ENCODE measurements at regions of chr10 and their contacts with region 1.

Region 1: GRCh38 chr10:88791924-88792323 is 10.6 kb upstream of the LIPM start:
- DNase-seq: peak; percentile 25
- H3K4me3 Mint-ChIP-seq: no peak overlapping the region
- H3K27ac Mint-ChIP-seq: no peak overlapping the region
- H3K4me1 Mint-ChIP-seq: peaks cover 19% of the 10 kb centered on the region
- H3K27me3 Mint-ChIP-seq: peaks cover 4% of the 10 kb centered on the region

Region 2: DNA sequence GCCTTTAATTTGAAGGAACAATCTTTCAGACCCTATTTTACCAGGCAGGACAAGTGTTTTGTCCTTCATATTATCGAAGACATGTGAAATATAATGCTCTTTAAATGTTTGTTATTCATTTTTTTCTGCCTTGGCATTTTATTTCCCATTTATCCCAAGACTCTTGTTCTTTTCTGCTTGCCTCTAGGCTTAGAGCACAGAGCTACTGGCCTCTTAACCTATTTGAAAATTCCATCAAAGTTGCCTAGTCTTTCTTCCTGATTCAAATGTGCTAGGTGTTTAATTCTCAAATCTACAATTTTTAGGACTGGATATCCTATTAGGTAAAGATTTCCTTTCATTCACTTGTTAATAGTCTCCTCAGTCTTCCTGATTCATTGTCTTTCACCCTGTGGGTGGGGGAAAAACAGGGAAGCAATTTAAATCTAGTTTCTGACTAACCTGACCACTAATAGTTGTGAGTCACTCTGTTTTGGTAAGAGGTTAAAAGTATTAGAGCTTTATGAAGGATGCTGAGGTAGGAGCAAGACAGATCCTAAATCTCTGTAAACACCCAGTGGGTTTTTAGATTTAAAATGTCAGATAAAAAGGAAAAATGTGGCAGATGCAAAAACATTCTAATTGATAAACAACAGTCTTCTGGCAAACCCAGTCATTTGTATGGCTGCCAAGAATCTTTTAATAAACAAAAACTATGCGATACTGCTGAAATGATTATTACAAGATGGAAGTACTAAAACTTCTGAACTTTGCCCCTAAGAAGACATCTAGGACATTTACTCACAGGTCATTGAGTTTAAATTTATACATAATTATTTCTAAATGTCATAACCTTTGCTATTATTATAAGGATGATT is 84.3 kb before region 1 on chr10:
- CTCF ChIA-PET with region 1: interaction called, 5 read pairs
- intact Hi-C with region 1: loop called (anchors 1 kb)
- DNase-seq: peak; percentile 37
- H3K4me3 Mint-ChIP-seq: no peak overlapping the region
- H3K27ac Mint-ChIP-seq: no peak overlapping the region
- H3K4me1 Mint-ChIP-seq: peaks cover 18% of the 10 kb centered on the region
- H3K27me3 Mint-ChIP-seq: peaks cover 3% of the 10 kb centered on the region

Region 3: DNA sequence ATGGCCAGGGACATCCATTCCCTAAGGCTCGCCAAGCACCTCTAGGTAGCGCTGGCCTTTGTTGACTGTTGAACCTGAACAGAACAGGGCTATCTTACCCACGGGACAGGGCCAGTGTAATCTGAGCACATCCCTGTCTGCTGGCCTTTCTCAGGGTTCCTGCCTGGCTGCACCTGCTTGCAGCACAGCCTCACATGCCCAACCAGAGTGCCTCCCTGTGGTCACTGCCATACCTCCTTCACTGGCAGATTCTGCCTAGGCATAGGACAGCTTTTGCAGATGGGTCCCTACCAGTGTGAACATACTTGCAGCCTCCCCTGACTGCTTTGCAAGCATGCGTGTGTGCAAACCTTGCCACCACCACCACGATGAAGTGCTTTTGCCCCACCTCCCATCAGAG is 47.9 kb before region 1 on chr10:
- CTCF ChIA-PET with region 1: no interaction called
- intact Hi-C with region 1: no loop called
- DNase-seq: no peak
- H3K4me3 Mint-ChIP-seq: no peak overlapping the region
- H3K27ac Mint-ChIP-seq: no peak overlapping the region
- H3K4me1 Mint-ChIP-seq: no peaks in the 10 kb centered on the region
- H3K27me3 Mint-ChIP-seq: peaks cover 20% of the 10 kb centered on the region

Region 4: DNA sequence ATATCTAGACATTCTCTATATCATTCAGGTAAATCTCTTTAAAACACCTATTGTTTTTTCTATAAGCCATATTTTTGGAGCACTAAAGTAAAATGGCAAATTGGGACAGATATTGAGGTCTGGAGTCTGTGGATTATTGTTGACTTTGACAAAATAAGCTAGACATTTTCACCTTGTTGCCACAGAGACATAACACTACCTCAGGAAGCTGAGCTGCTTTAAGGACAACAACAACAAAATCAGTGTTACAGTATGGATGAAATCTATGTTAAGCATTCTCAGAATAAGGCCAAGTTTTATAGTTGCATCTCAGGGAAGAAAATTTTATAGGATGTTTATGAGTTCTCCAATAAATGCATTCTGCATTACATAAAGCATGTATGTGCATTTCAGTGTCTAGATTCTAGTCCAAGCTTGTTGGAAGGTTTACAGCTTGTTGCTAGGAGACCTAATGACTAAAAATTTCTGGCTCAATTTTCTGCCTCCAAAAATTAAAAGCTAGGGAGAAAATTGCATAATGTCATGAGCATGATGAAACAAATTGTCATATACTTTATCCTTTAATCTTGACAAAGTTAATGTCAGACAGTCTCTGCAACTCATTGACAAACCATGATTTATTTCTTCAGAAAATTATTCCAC is 28.9 kb after region 1 on chr10:
- CTCF ChIA-PET with region 1: interaction called, 3 read pairs
- intact Hi-C with region 1: loop called (anchors 1 kb)
- DNase-seq: no peak
- H3K4me3 Mint-ChIP-seq: no peak overlapping the region
- H3K27ac Mint-ChIP-seq: no peak overlapping the region
- H3K4me1 Mint-ChIP-seq: peaks cover 27% of the 10 kb centered on the region
- H3K27me3 Mint-ChIP-seq: no peaks in the 10 kb centered on the region

Region 5: DNA sequence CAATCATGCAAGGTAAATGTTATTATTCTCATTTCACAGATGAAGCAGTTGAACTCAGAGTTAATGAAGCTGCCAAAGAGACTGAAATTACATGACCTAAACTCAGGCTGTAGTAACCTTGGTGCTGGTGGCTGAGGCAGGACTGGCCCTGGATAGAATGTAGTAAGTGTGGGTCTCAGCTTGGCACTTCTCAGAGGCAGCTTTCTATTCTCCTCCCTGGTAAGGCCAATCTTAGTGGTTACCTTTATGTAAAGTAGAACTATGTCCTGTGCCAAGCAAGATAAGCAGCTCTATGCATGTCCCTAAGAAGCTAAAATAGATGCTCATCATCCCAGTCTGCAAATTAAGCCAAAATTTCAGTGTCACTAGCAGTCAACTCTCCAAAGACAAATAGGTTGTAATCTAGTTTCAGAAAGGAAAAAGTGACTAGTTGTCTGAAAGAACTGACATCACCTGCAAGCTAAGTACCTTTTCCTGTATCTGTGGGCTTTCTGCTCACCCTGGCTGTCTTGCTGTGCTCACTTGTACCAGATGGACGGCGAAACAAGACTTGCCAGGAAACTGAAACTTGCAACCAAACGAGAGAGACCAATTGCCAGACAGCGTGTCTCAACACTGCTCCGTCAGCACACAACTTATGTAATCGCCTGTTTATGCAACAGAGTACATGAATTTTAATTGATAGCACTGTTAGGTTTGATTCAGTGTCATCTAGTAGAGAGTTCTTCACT is 371.5 kb after region 1 on chr10:
- CTCF ChIA-PET with region 1: no interaction called
- intact Hi-C with region 1: loop called (anchors 2 kb)
- DNase-seq: peak; percentile 69
- H3K4me3 Mint-ChIP-seq: peak overlapping the region; percentile 33
- H3K27ac Mint-ChIP-seq: peak overlapping the region; percentile 5
- H3K4me1 Mint-ChIP-seq: peaks cover 36% of the 10 kb centered on the region
- H3K27me3 Mint-ChIP-seq: peaks cover 7% of the 10 kb centered on the region

Region 6: DNA sequence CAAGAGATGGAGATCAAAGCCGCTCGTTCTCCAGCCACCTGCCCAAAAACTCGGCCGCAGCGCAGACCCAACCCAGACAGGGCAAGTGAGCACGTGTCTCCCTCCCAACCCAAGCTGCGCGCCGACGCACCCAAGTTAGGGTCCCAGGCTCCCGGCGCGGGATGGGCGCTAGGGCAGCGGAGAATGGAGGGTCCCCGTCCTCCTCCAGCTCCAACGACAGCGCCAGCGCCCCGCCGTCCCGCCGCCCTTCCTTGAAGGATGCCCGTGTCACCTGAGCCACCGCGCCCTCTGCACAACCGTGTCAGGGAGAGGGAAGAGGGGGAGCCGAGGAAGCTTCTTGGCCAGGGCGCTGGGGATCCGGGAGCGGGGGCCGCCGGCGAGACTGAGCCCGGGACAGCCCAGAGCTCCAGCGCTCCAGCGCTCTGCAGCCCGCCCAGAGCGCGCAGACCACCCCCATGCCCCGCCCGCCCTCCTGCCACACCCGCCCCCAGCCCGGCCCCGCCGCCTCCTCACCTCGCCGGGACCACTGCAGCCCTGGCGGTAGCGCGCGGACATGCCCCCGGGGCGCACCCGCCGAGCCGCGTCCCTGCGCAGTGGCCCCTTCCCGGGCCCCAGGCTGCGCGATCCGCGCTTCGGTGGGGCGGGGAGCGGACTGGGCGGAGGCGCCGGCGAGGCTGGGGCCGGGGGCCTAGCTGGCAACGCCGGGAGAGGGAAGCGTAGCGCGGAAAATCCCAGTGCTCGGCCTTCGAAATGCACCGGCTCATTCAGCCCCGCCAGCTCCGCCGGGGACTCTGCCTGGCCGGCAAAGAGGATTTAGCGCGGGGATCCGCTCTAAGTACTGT is 743.5 kb after region 1 on chr10 and contains the start of gene SLC16A12:
- CTCF ChIA-PET with region 1: no interaction called
- intact Hi-C with region 1: no loop called
- DNase-seq: no peak
- H3K4me3 Mint-ChIP-seq: peak within 1 kb of the TSS; percentile 25
- H3K27ac Mint-ChIP-seq: no peak within 1 kb of the TSS
- H3K4me1 Mint-ChIP-seq: peaks cover 8% of the 10 kb centered on the region
- H3K27me3 Mint-ChIP-seq: peaks cover 56% of the 10 kb centered on the region
- total RNA-seq, gene SLC16A12: not detected

Measured in activated naive CD4-positive, alpha-beta T cell treated with anti-CD3 and anti-CD28 coated beads for 36 hours (primary cell).